ENCODE measurements at regions of chr5 and their contacts with region 1.

Region 1: GRCh38 chr5:6699357-6699756 is 13.9 kb upstream of the TENT4A start:
- DNase-seq: no peak
- H3K4me3 ChIP-seq: no peak overlapping the region
- CTCF ChIP-seq: no peak
- POLR2A ChIP-seq: no peak

Region 2: GRCh38 chr5:6029811-6030271 is 669.5 kb before region 1 on chr5:
- intact Hi-C with region 1: loop called (anchors 5 kb)
- DNase-seq: peak in 1 of 2 donors; percentile 12
- H3K4me3 ChIP-seq: no peak overlapping the region
- CTCF ChIP-seq: no peak
- POLR2A ChIP-seq: no peak